ENCODE measurements at regions of chr1 and their contacts with region 1.

Region 1: GRCh38 chr1:79617777-79618176 is 611.2 kb upstream of the ADGRL4 start:
- DNase-seq: no peak
- H3K4me3 ChIP-seq: no peak overlapping the region
- H3K27ac ChIP-seq: no peak overlapping the region
- H3K4me1 ChIP-seq: no peaks in the 10 kb centered on the region
- H3K27me3 ChIP-seq: no peaks in the 10 kb centered on the region
- CTCF ChIP-seq: peak; percentile 43; the same call in 1 of the 2 replicates

Region 2: GRCh38 chr1:79554688-79555087 is 63.1 kb before region 1 on chr1:
- CTCF ChIA-PET with region 1: no interaction called
- POLR2A ChIA-PET with region 1: no interaction called
- intact Hi-C with region 1: no loop called
- DNase-seq: no peak
- H3K4me3 ChIP-seq: no peak overlapping the region
- H3K27ac ChIP-seq: no peak overlapping the region
- H3K4me1 ChIP-seq: no peaks in the 10 kb centered on the region
- H3K27me3 ChIP-seq: no peaks in the 10 kb centered on the region
- CTCF ChIP-seq: no peak

Region 3: DNA sequence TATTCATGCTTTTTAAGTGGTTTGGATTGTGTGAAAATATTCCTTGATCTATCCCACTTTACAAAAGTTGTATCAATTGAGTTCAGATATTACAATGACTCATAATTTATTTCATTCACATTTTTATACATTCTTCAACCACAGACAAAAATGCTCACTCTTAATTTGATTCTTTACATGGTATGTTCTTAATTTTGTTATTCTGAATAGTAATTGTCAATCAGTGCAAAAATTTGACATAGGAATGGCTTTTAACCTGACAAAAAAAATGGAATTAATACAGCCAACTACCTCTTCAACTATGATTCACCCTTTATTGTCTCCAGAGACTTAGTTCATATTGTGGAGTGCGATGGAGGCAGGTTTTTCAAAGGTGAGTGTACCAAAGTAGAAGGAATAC is 391.2 kb after region 1 on chr1:
- CTCF ChIA-PET with region 1: interaction called, 16 read pairs
- POLR2A ChIA-PET with region 1: no interaction called
- intact Hi-C with region 1: no loop called
- DNase-seq: no peak
- H3K4me3 ChIP-seq: no peak overlapping the region
- H3K27ac ChIP-seq: no peak overlapping the region
- H3K4me1 ChIP-seq: no peaks in the 10 kb centered on the region
- H3K27me3 ChIP-seq: no peaks in the 10 kb centered on the region
- CTCF ChIP-seq: no peak